ENCODE measurements at regions of chr14 and their contacts with region 1.

Region 1: DNA sequence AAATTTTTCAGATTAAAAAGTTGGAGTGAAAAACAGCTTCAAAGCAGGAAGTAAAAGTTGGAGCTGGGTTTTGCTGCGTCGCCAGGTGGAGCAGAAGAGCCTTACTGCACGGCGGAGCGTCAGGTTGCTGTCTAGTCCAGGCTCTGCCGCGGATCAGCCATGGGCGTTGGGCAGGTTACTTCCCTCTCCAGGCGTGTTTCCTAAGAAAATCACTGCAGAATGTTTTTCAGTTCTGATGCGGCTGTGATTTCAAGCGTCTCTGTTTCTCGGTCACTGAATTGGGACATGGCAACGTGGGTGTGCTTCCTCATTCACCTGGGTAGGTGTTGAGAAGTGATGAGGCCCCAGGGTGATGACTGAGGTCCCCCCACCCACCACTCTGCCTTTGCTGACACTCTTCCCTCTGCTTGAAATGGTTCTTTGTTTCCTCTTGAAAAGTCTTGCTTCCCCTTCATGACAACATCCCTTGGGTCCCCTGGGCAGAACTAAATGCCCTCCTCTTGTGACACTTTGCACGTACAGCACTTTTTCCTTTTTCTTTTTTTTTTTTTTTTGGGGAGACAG is 7.6 kb downstream of the EVL start:
- DNase-seq: peak; percentile 28 to 53
- H3K4me3 ChIP-seq: no peak overlapping the region
- H3K27ac ChIP-seq: no peak overlapping the region
- H3K4me1 ChIP-seq: peaks cover 29% of the 10 kb centered on the region
- H3K27me3 ChIP-seq: no peaks in the 10 kb centered on the region
- CTCF ChIP-seq: peak; percentile 47

Region 2: GRCh38 chr14:100108042-100108825 is 35.4 kb after region 1 on chr14:
- CTCF ChIA-PET with region 1: interaction called, 6 read pairs
- POLR2A ChIA-PET with region 1: no interaction called
- intact Hi-C with region 1: loop called (anchors 5 kb)
- DNase-seq: peak in 1 of 2 experiments; percentile 32
- H3K4me3 ChIP-seq: no peak overlapping the region
- H3K27ac ChIP-seq: no peak overlapping the region
- H3K4me1 ChIP-seq: no peaks in the 10 kb centered on the region
- H3K27me3 ChIP-seq: no peaks in the 10 kb centered on the region
- CTCF ChIP-seq: peak; percentile 83

Region 3: GRCh38 chr14:100192672-100193416 is 120.0 kb after region 1 on chr14:
- CTCF ChIA-PET with region 1: interaction called, 4 read pairs
- POLR2A ChIA-PET with region 1: interaction called, 7 read pairs
- intact Hi-C with region 1: loop called (anchors 2 kb)
- DNase-seq: peak; percentile 91
- H3K4me3 ChIP-seq: peak overlapping the region; percentile 46; the same call in 1 of the 2 replicates
- H3K27ac ChIP-seq: peak overlapping the region; percentile 51; the same call in 1 of the 2 replicates
- H3K4me1 ChIP-seq: peaks cover 13% of the 10 kb centered on the region; the same call in 1 of the 2 replicates
- H3K27me3 ChIP-seq: no peaks in the 10 kb centered on the region
- CTCF ChIP-seq: peak; percentile 71

Measured in PC-9 (cell line).